ENCODE measurements at regions of chr15 and their contacts with region 1.

Region 1: GRCh38 chr15:60779718-60780503 is 301.0 kb upstream of the ICE2 start:
- DNase-seq: no peak
- H3K4me3 Mint-ChIP-seq: no peak overlapping the region
- H3K27ac Mint-ChIP-seq: no peak overlapping the region
- H3K4me1 Mint-ChIP-seq: no peaks in the 10 kb centered on the region
- H3K27me3 Mint-ChIP-seq: peaks cover 84% of the 10 kb centered on the region
- CTCF ChIP-seq: no peak

Region 2: GRCh38 chr15:60720493-60721256 is 59.2 kb before region 1 on chr15:
- CTCF ChIA-PET with region 1: interaction called, 14 read pairs
- intact Hi-C with region 1: no loop called
- DNase-seq: peak; percentile 40
- H3K4me3 Mint-ChIP-seq: peak overlapping the region; percentile 33
- H3K27ac Mint-ChIP-seq: peak overlapping the region; percentile 55
- H3K4me1 Mint-ChIP-seq: peaks cover 40% of the 10 kb centered on the region
- H3K27me3 Mint-ChIP-seq: no peaks in the 10 kb centered on the region
- CTCF ChIP-seq: no peak

Region 3: GRCh38 chr15:60793656-60794055 is 13.7 kb after region 1 on chr15:
- CTCF ChIA-PET with region 1: no interaction called
- intact Hi-C with region 1: no loop called
- DNase-seq: no peak
- H3K4me3 Mint-ChIP-seq: no peak overlapping the region
- H3K27ac Mint-ChIP-seq: no peak overlapping the region
- H3K4me1 Mint-ChIP-seq: no peaks in the 10 kb centered on the region
- H3K27me3 Mint-ChIP-seq: peaks cover 43% of the 10 kb centered on the region
- CTCF ChIP-seq: no peak

Region 4: GRCh38 chr15:60804986-60805949 is 25.4 kb after region 1 on chr15:
- CTCF ChIA-PET with region 1: no interaction called
- intact Hi-C with region 1: no loop called
- DNase-seq: no peak
- H3K4me3 Mint-ChIP-seq: no peak overlapping the region
- H3K27ac Mint-ChIP-seq: no peak overlapping the region
- H3K4me1 Mint-ChIP-seq: peaks cover 3% of the 10 kb centered on the region
- H3K27me3 Mint-ChIP-seq: peaks cover 63% of the 10 kb centered on the region
- CTCF ChIP-seq: no peak

Region 5: DNA sequence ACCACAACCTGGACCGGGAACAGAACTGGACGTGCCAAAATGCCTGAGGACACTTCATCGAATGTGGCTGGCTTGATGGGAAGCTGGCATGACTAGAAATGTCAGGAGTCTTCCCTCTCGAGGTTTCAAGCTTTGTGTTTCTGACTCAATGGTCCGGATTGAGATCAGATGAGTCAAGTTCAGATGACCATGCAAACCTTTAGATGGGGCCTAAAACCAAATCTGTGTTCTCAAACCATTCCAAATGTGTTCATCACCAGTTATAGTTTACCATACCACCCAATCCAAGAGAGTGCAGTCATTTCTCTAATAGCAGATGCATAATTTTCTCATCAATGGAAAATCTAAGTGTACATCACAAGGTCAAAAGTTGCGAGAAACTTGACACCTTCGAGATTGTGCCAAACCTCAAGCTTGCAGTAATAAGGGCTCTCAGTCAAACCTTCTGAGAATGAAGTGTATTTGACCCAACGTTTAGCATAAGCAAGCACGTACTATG is 80.1 kb after region 1 on chr15:
- CTCF ChIA-PET with region 1: no interaction called
- intact Hi-C with region 1: no loop called
- DNase-seq: no peak
- H3K4me3 Mint-ChIP-seq: no peak overlapping the region
- H3K27ac Mint-ChIP-seq: no peak overlapping the region
- H3K4me1 Mint-ChIP-seq: no peaks in the 10 kb centered on the region
- H3K27me3 Mint-ChIP-seq: peaks cover 73% of the 10 kb centered on the region
- CTCF ChIP-seq: no peak

Region 6: GRCh38 chr15:61687124-61687523 is 907.2 kb after region 1 on chr15:
- CTCF ChIA-PET with region 1: no interaction called
- intact Hi-C with region 1: no loop called
- DNase-seq: no peak
- H3K4me3 Mint-ChIP-seq: no peak overlapping the region
- H3K27ac Mint-ChIP-seq: no peak overlapping the region
- H3K4me1 Mint-ChIP-seq: no peaks in the 10 kb centered on the region
- H3K27me3 Mint-ChIP-seq: peaks cover 76% of the 10 kb centered on the region
- CTCF ChIP-seq: no peak